Esophagus muscularis mucosa (tissue), 4 donors: ENCODE measurements at regions of chr7 and their contacts with region 1.

Region 1: GRCh38 chr7:140175221-140176121 is 1.3 kb downstream of the KDM7A start:
- DNase-seq: peak; percentile 98
- H3K4me3 ChIP-seq: peak overlapping the region; percentile 95 to 98 (median 96)
- H3K27ac ChIP-seq: peak overlapping the region; percentile 99 to 100 (median 100)
- H3K4me1 ChIP-seq: peaks cover 23 to 45% (median 35%) of the 10 kb centered on the region in 4 donors
- H3K27me3 ChIP-seq: no peaks in the 10 kb centered on the region
- CTCF ChIP-seq: peak; percentile 77 to 86 (median 80)
- EP300 ChIP-seq: no peak
- POLR2A ChIP-seq: peak; percentile 92

Region 2: DNA sequence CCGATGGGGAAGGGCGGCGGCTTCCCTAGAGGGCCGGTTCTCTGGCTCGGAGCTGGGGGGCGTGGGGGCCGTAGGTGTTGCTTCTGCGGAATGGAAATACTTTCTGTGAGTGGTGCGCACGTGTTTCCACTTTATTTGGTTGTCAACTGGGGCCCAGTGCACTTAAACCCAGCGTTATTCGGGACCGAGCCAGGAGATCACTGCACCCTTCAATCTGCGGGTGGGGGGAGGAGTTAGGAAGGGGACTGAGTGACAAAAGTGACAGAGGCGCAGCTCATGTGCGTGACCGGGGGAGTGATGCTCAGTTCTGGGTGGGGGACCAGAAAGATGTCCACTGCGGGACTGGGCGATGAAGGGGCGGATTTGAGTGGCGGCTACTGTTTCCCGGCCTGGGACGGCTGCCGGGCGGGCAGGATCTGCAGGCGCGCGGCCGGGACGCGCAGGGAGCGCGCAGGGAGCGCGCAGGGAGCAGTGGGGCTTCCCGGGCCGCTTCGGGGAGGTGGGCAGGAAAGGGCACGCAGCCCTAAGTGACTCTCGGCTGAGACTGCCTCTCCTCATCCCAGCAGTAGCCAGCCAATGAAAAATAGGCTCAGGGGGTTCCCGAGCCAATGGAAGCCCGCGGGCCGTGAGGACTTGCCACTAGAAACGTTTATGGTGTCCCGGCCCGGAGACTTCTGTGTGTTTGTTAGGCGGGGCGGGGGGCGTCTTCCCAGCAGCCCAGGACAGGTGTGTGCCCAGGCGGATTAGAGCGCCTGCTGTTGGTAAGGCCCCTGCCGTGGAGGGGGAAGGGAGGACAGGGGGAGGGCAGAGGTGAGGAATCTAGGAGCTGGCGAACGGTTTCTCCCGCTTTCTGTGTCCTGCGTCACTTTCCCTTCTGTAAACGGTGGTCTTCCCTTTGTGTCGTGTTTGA is 55.6 kb after region 1 on chr7:
- intact Hi-C with region 1: loop called (anchors 5 kb)
- DNase-seq: no peak
- H3K4me3 ChIP-seq: peak overlapping the region; percentile 48 to 73 (median 60)
- H3K27ac ChIP-seq: peak overlapping the region in 3 of 4 donors; percentile 20 to 38 (median 20)
- H3K4me1 ChIP-seq: peaks cover 8 to 26% (median 26%) of the 10 kb centered on the region in 4 donors
- H3K27me3 ChIP-seq: peaks cover 0 to 16% (median 2%) of the 10 kb centered on the region in 4 donors
- CTCF ChIP-seq: no peak
- EP300 ChIP-seq: no peak
- POLR2A ChIP-seq: no peak

Region 3: GRCh38 chr7:140326116-140326928 is 150.9 kb after region 1 on chr7:
- intact Hi-C with region 1: loop called (anchors 2 kb)
- DNase-seq: no peak
- H3K4me3 ChIP-seq: peak overlapping the region; percentile 12 to 32 (median 24)
- H3K27ac ChIP-seq: peak overlapping the region; percentile 45 to 56 (median 46)
- H3K4me1 ChIP-seq: peaks cover 4 to 16% (median 13%) of the 10 kb centered on the region in 4 donors
- H3K27me3 ChIP-seq: no peaks in the 10 kb centered on the region
- CTCF ChIP-seq: peak; percentile 67 to 78 (median 72)
- EP300 ChIP-seq: no peak
- POLR2A ChIP-seq: no peak